ENCODE measurements at regions of chr13 and their contacts with region 1.

Region 1: GRCh38 chr13:98466634-98467236 is 110.2 kb downstream of the STK24 start:
- DNase-seq: peak; percentile 50
- H3K4me3 Mint-ChIP-seq: no peak overlapping the region
- H3K27ac Mint-ChIP-seq: peak overlapping the region; percentile 49
- H3K4me1 Mint-ChIP-seq: peaks cover 20% of the 10 kb centered on the region
- H3K27me3 Mint-ChIP-seq: no peaks in the 10 kb centered on the region

Region 2: GRCh38 chr13:98454389-98454881 is 12.3 kb before region 1 on chr13:
- CTCF ChIA-PET with region 1: interaction called, 12 read pairs
- DNase-seq: no peak
- H3K4me3 Mint-ChIP-seq: no peak overlapping the region
- H3K27ac Mint-ChIP-seq: peak overlapping the region; percentile 49
- H3K4me1 Mint-ChIP-seq: peaks cover 20% of the 10 kb centered on the region
- H3K27me3 Mint-ChIP-seq: no peaks in the 10 kb centered on the region

Region 3: GRCh38 chr13:98632961-98633360 is 166.2 kb after region 1 on chr13:
- CTCF ChIA-PET with region 1: no interaction called
- DNase-seq: no peak
- H3K4me3 Mint-ChIP-seq: no peak overlapping the region
- H3K27ac Mint-ChIP-seq: no peak overlapping the region
- H3K4me1 Mint-ChIP-seq: peaks cover 2% of the 10 kb centered on the region
- H3K27me3 Mint-ChIP-seq: peaks cover 8% of the 10 kb centered on the region

Measured in activated naive CD4-positive, alpha-beta T cell treated with anti-CD3 and anti-CD28 coated beads, Interleukin-2, amount 10 ng/mL, durations not matched to agents 7 days and 5 days (primary cell).